HEK293 (cell line): ENCODE measurements at regions of chr5 and their contacts with region 1.

Region 1: GRCh38 chr5:61658592-61659008 is 326.5 kb downstream of the ZSWIM6 start:
- H3K4me3 ChIP-seq: no peak overlapping the region
- H3K27ac ChIP-seq: no peak overlapping the region
- H3K4me1 ChIP-seq: no peaks in the 10 kb centered on the region
- CTCF ChIP-seq: peak; percentile 67

Region 2: DNA sequence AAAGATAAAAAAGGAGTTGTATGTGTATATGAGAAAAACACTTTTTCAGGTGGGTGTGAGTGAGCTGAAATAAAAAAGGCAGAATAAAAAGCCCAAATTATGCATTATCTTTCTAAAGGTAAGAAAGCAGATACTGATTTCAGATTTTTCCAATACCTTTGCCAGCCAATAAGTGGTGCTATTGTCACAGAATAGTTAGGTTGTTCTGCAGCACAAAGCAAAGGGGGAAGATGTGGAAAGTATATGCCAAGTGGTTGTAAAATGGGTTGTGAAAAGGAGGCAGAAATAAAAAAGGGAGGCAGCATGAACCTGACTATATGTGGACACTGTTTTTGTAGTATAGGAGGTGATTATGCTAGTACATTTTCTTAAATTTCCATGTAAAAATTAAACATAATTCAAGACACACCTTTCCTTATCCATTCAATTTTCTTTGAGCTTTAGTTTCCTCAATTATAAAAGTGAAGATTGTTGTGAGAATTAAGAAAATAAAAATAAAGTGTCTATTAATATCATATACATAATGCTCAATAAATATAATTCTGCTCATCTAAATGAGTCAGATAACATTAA is 603.1 kb before region 1 on chr5:
- CTCF ChIA-PET with region 1: interaction called, 27 read pairs
- POLR2A ChIA-PET with region 1: no interaction called
- H3K4me3 ChIP-seq: no peak overlapping the region
- H3K27ac ChIP-seq: no peak overlapping the region
- H3K4me1 ChIP-seq: peaks cover 6% of the 10 kb centered on the region; the same call in 1 of the 2 replicates
- CTCF ChIP-seq: peak; percentile 66; the same call in 1 of the 2 replicates

Region 3: DNA sequence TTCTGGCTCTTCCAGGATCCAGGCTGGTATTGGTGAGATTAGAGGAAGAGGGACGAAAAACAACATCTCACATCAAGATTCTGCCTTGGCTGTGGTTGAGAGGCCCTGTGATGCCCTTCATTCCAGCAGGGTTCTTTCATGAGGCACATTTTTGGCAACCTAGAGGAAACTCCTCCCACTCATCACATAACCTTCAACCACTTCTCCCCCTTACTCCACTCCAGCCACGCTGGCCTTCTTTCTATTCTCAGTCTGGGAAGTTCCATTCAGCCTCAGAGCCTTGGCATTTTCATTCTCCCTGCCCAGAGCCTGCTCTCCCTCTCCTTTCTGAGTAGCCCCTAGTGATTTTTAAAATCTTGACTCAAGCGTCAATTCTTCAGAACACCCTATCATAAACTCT is 10.9 kb after region 1 on chr5:
- CTCF ChIA-PET with region 1: interaction called, 18 read pairs
- POLR2A ChIA-PET with region 1: no interaction called
- H3K4me3 ChIP-seq: no peak overlapping the region
- H3K27ac ChIP-seq: no peak overlapping the region
- H3K4me1 ChIP-seq: no peaks in the 10 kb centered on the region
- CTCF ChIP-seq: no peak

Region 4: GRCh38 chr5:61809651-61810050 is 151.1 kb after region 1 on chr5:
- CTCF ChIA-PET with region 1: no interaction called
- POLR2A ChIA-PET with region 1: no interaction called
- H3K4me3 ChIP-seq: no peak overlapping the region
- H3K27ac ChIP-seq: no peak overlapping the region
- H3K4me1 ChIP-seq: no peaks in the 10 kb centered on the region
- CTCF ChIP-seq: no peak

Region 5: GRCh38 chr5:61933787-61934626 is 275.4 kb after region 1 on chr5:
- CTCF ChIA-PET with region 1: interaction called, 11 read pairs
- POLR2A ChIA-PET with region 1: no interaction called
- H3K4me3 ChIP-seq: no peak overlapping the region
- H3K27ac ChIP-seq: no peak overlapping the region
- H3K4me1 ChIP-seq: peaks cover 2% of the 10 kb centered on the region; the same call in 1 of the 2 replicates
- CTCF ChIP-seq: peak; percentile 83